OCI-LY7 (cell line): ENCODE measurements at regions of chr1 and their contacts with region 1.

Region 1: GRCh38 chr1:66380452-66381212 is 153.3 kb upstream of the SGIP1 start:
- DNase-seq: peak; percentile 88
- H3K4me3 ChIP-seq: peak overlapping the region; percentile 42
- H3K27ac ChIP-seq: peak overlapping the region; percentile 67
- H3K4me1 ChIP-seq: peaks cover 39% of the 10 kb centered on the region
- CTCF ChIP-seq: no peak

Region 2: DNA sequence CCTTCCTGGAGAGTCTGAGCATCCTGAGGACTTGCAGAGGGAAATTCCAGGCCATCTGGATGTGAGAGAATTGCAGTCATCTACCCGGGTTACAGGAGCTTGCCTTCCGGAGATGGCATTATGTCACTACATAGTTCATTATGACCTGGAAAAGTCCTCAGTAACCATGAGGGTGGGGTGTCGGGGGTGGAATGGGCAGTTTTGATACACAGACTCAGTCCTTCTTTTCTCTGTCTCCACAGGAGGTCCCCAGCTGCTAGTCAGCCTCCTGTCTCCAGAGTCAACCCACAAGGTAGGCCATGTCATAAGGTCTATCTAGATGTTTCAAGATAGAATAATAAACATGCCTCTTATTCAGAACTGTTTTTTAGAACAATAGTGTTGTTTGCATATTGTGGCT is 114.8 kb before region 1 on chr1:
- CTCF ChIA-PET with region 1: no interaction called
- POLR2A ChIA-PET with region 1: no interaction called
- intact Hi-C with region 1: no loop called
- DNase-seq: no peak
- H3K4me3 ChIP-seq: no peak overlapping the region
- H3K27ac ChIP-seq: no peak overlapping the region
- H3K4me1 ChIP-seq: peaks cover 8% of the 10 kb centered on the region
- CTCF ChIP-seq: no peak

Region 3: DNA sequence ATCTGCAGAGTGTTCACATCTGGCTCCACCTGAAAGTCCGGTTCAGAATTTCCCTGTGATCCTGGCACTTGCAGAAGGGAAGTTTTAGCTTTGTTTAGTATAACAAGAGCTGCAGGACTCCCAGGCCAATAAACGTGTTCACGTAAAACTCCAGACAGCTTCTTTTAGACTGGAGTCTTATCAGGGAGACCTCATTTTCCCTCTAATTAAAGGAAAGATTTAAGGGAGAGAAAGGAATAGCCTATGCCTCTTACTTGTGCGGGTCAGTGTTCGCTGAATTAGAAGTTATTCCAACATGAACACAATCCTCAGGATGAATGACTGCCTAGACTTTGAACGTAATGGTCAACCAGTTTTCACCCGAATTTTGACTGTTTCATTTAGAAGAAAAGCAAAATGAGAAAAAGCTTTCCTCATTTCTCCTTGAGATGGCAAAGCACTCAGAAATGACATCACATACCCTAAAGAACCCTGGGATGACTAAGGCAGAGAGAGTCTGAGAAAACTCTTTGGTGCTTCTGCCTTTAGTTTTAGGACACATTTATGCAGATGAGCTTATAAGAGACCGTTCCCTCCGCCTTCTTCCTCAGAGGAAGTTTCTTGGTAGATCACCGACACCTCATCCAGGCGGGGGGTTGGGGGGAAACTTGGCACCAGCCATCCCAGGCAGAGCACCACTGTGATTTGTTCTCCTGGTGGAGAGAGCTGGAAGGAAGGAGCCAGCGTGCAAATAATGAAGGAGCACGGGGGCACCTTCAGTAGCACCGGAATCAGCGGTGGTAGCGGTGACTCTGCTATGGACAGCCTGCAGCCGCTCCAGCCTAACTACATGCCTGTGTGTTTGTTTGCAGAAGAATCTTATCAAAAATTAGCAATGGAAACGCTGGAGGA is 48.7 kb before region 1 on chr1:
- CTCF ChIA-PET with region 1: interaction called, 3 read pairs
- POLR2A ChIA-PET with region 1: interaction called, 5 read pairs
- intact Hi-C with region 1: loop called (anchors 2 kb)
- DNase-seq: peak; percentile 61
- H3K4me3 ChIP-seq: peak overlapping the region; percentile 77
- H3K27ac ChIP-seq: peak overlapping the region; percentile 93
- H3K4me1 ChIP-seq: peaks cover 71% of the 10 kb centered on the region
- CTCF ChIP-seq: no peak

Region 4: GRCh38 chr1:66342707-66343106 is 37.9 kb before region 1 on chr1:
- CTCF ChIA-PET with region 1: no interaction called
- POLR2A ChIA-PET with region 1: interaction called, 27 read pairs
- intact Hi-C with region 1: no loop called
- DNase-seq: peak; percentile 70
- H3K4me3 ChIP-seq: peak overlapping the region; percentile 51
- H3K27ac ChIP-seq: peak overlapping the region; percentile 47
- H3K4me1 ChIP-seq: peaks cover 75% of the 10 kb centered on the region
- CTCF ChIP-seq: 0 out of 2 replicates have a peak, but pooled peaks have one; percentile 13

Region 5: DNA sequence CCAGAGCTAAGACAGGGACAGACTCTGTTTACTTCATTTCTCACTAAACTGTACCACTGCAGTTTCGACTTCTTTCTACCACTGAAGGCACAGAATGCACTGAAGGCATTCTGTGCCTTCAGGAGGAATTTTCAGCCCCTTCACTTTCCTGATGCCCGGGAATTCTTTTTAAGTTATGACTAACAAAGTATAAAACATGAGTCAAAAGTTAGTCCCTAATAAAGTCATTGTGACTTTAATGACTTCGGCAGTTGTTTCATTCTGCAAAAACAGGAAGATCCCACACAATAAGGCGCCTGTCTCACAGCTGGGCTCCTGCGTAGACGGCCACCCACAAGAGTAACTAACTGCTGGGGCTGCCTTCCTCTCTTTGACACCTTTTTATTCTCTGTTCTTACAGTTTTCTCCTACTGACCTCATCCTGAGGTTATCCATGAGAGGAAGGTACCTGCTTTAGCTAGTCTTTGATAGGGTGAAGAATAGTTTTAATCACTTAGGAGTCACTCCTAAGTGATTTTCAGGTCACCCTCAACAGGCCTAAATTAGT is 30.6 kb before region 1 on chr1:
- CTCF ChIA-PET with region 1: no interaction called
- POLR2A ChIA-PET with region 1: interaction called, 27 read pairs
- intact Hi-C with region 1: no loop called
- DNase-seq: peak; percentile 70
- H3K4me3 ChIP-seq: peak overlapping the region; percentile 47
- H3K27ac ChIP-seq: peak overlapping the region; percentile 54
- H3K4me1 ChIP-seq: peaks cover 59% of the 10 kb centered on the region
- CTCF ChIP-seq: no peak

Region 6: GRCh38 chr1:66396212-66396890 is 15.7 kb after region 1 on chr1:
- CTCF ChIA-PET with region 1: no interaction called
- POLR2A ChIA-PET with region 1: interaction called, 16 read pairs
- intact Hi-C with region 1: loop called (anchors 2 kb)
- DNase-seq: no peak
- H3K4me3 ChIP-seq: no peak overlapping the region
- H3K27ac ChIP-seq: no peak overlapping the region
- H3K4me1 ChIP-seq: peaks cover 78% of the 10 kb centered on the region
- CTCF ChIP-seq: no peak

Region 7: GRCh38 chr1:66490816-66491215 is 110.2 kb after region 1 on chr1:
- CTCF ChIA-PET with region 1: no interaction called
- POLR2A ChIA-PET with region 1: no interaction called
- intact Hi-C with region 1: no loop called
- DNase-seq: no peak
- H3K4me3 ChIP-seq: no peak overlapping the region
- H3K27ac ChIP-seq: no peak overlapping the region
- H3K4me1 ChIP-seq: no peaks in the 10 kb centered on the region
- CTCF ChIP-seq: no peak